HCT116 (cell line): ENCODE measurements at regions of chr3 and their contacts with region 1.

Region 1: DNA sequence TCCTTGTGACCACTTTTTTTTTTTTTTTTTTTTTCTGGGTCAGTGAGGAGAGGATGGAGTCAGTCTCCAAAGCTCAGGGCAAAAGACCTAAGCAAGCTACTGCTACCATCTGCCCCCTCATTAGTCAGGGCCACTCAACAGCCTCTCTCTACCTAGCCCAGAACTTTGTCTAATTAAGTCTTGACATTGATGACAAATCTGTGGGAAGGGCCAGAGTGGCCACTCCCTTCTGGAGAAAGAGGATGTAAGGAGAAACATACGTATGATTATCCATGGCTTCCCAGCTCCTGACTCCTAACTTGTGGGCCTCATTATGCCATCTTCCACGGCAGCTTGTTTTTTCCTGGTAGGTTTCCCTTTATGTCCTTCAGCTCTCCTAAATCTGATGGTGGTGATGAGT is 37.9 kb downstream of the NR1I2 start:
- DNase-seq: no peak
- ATAC-seq: no peak
- H3K4me3 ChIP-seq: no peak overlapping the region
- H3K27ac ChIP-seq: no peak overlapping the region
- H3K4me1 ChIP-seq: no peaks in the 10 kb centered on the region
- H3K27me3 ChIP-seq: no peaks in the 10 kb centered on the region
- CTCF ChIP-seq: no peak
- POLR2A ChIP-seq: no peak
- RAD21 ChIP-seq: no peak

Region 2: GRCh38 chr3:119469381-119470189 is 350.2 kb before region 1 on chr3:
- CTCF ChIA-PET with region 1: no interaction called
- POLR2A ChIA-PET with region 1: no interaction called
- RAD21 ChIA-PET with region 1: no interaction called
- intact Hi-C with region 1: no loop called
- DNase-seq: no peak
- ATAC-seq: no peak; the same call in 1 of the 2 replicates
- H3K4me3 ChIP-seq: peak overlapping the region; percentile 73 to 80
- H3K27ac ChIP-seq: peak overlapping the region; percentile 67
- H3K4me1 ChIP-seq: peaks cover 10 to 17% of the 10 kb centered on the region in 2 experiments; a peak in 3 of 4 replicates
- H3K27me3 ChIP-seq: no peaks in the 10 kb centered on the region
- CTCF ChIP-seq: 0 out of 6 replicates have a peak, but pooled peaks of 1 of the 3 experiments have one; percentile 3
- POLR2A ChIP-seq: no peak
- RAD21 ChIP-seq: no peak

Region 3: GRCh38 chr3:120182724-120183524 is 363.1 kb after region 1 on chr3:
- CTCF ChIA-PET with region 1: no interaction called
- POLR2A ChIA-PET with region 1: no interaction called
- RAD21 ChIA-PET with region 1: no interaction called
- intact Hi-C with region 1: loop called (anchors 1 kb)
- DNase-seq: peak; percentile 26
- ATAC-seq: peak; percentile 83
- H3K4me3 ChIP-seq: no peak overlapping the region
- H3K27ac ChIP-seq: no peak overlapping the region
- H3K4me1 ChIP-seq: peaks cover 0 to 5% of the 10 kb centered on the region in 2 experiments; a peak in 1 of 4 replicates
- H3K27me3 ChIP-seq: no peaks in the 10 kb centered on the region
- CTCF ChIP-seq: peak in 2 of 3 experiments; percentile 64 to 91; a peak in 4 of 6 replicates
- POLR2A ChIP-seq: no peak
- RAD21 ChIP-seq: peak; percentile 84

Region 4: GRCh38 chr3:120198305-120198878 is 378.6 kb after region 1 on chr3:
- CTCF ChIA-PET with region 1: no interaction called
- POLR2A ChIA-PET with region 1: no interaction called
- RAD21 ChIA-PET with region 1: no interaction called
- intact Hi-C with region 1: loop called (anchors 5 kb)
- DNase-seq: peak; percentile 8
- ATAC-seq: peak; percentile 74
- H3K4me3 ChIP-seq: no peak overlapping the region
- H3K27ac ChIP-seq: no peak overlapping the region
- H3K4me1 ChIP-seq: no peaks in the 10 kb centered on the region
- H3K27me3 ChIP-seq: no peaks in the 10 kb centered on the region
- CTCF ChIP-seq: peak; percentile 4 to 44 (median 31); a peak in 3 of 6 replicates
- POLR2A ChIP-seq: no peak
- RAD21 ChIP-seq: peak; percentile 72

Region 5: DNA sequence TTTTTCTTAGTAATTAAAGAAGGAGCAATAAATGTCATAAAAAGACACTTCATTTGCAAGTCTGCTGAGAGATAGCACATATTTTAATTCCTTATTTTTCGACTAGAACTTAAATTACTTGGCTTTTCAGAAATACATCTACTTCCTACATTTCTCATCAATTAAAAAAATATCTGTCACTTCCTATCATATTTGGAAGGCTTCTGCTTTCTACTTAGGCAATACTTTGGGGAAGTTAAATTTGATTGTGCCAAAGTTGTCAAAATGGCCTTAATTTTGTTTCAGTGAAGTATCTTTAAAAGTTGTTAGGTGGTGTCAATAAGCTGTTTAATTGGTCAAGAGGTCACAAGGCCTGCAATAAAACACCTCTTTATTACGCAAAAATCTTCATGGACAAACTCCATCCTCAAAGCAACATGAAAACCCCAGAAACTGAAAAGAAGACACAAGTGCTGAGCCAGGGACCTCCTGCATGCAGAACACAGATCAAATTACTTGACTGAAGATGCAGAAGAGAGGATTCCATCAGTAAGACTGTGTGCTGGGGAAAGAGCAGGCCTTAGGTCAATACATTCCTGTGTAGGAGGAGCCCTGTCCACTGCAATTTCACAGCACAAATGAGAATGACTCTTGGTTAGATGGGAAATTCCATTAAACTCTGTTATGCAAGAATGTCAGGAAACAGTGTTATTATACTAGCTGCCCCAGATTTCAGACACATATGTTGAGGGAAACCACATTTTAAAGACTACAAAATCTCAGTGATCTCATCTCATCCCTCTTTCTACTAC is 678.9 kb after region 1 on chr3:
- CTCF ChIA-PET with region 1: no interaction called
- POLR2A ChIA-PET with region 1: no interaction called
- RAD21 ChIA-PET with region 1: no interaction called
- intact Hi-C with region 1: no loop called
- DNase-seq: no peak
- ATAC-seq: no peak
- H3K4me3 ChIP-seq: no peak overlapping the region
- H3K27ac ChIP-seq: no peak overlapping the region
- H3K4me1 ChIP-seq: peaks cover 0 to 11% of the 10 kb centered on the region in 2 experiments; a peak in 1 of 4 replicates
- H3K27me3 ChIP-seq: no peaks in the 10 kb centered on the region
- CTCF ChIP-seq: no peak
- POLR2A ChIP-seq: no peak
- RAD21 ChIP-seq: no peak